ENCODE measurements at regions of chr3 and their contacts with region 1.

Region 1: DNA sequence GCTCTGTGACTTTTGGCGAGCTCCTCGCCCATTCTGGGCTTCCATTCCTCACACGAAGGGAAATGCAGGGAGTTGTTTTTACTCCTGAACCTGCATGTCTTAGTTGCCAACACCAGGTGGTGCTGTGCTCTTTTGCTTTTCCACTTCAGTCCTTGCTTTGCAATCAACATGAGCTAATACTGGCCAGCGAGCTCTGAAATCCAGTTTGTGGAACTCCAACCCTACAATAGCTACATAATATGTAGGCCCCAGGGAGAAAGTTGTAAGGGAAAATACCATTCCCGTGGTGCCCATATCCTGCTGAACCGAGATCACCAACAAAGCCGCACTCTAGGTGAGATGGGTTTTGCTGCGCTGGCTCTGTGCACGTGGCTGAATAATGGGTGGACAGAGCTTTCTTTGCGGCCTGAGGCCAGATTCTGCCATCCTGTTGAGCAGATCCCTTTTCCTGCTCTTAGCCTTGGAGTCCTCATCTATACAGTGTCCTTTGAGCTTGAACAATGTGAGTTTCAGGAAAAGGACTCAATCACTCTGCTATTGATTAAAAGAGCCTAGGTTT is 25.0 kb downstream of the LSM3 start:
- DNase-seq: peak; percentile 77
- H3K4me3 ChIP-seq: no peak overlapping the region
- H3K27ac ChIP-seq: no peak overlapping the region
- H3K27me3 ChIP-seq: no peaks in the 10 kb centered on the region
- CTCF ChIP-seq: peak; percentile 91

Region 2: DNA sequence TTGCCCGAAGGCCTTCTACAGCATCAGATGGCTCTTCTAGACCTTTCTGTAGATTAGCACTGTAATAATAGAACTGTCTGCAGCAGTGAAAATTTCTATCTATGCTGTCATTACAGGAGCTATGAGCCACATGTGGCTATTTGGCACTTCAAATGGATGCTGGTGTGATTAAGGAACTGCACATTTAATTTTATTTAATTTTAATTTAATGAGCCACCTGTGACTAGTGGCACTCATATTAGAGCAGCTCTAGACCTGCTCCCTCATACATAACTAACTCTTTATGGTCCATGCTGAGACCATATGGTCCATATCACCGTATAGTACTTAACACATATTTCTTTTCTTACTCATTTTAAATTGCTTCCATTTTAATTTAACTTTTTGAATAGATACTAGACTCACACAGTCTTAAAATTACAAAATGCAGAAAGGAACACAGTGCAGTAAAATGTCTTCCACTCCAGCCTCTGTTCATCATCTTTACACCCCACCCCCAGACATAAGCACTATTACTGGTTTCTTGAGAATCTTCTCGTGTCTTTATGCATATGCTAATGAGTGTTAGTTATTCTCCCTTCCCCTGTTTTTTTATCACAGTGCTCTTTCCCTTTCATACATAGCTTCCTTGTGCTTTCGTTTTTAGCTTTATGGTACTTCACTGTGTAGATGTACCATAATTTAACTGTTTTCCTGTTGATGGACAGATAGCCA is 15.4 kb before region 1 on chr3:
- CTCF ChIA-PET with region 1: interaction called, 14 read pairs
- POLR2A ChIA-PET with region 1: no interaction called
- DNase-seq: no peak
- H3K4me3 ChIP-seq: no peak overlapping the region
- H3K27ac ChIP-seq: no peak overlapping the region
- H3K27me3 ChIP-seq: no peaks in the 10 kb centered on the region
- CTCF ChIP-seq: no peak

Region 3: DNA sequence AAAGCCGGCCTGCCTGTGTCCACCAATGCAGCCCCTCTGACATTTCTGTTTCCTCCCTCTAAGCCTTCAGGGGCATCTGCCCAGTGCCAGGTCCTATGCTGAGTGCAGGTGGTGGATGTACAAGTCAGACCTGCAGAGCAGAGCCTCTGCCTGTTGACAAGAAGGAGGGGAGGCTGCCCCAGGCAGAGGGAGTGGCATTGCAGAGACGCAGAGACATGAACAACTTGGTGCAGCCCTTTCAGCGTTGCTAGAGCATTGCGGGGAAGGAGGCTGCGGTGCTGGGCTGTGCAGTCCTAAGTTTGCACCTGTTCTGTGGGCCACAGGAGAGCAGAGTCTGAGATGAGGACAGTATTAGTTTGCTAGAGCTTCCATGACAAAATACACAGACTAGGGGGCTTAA is 40.2 kb after region 1 on chr3:
- CTCF ChIA-PET with region 1: interaction called, 14 read pairs
- POLR2A ChIA-PET with region 1: no interaction called
- DNase-seq: no peak
- H3K4me3 ChIP-seq: no peak overlapping the region
- H3K27ac ChIP-seq: no peak overlapping the region
- H3K27me3 ChIP-seq: no peaks in the 10 kb centered on the region
- CTCF ChIP-seq: no peak

Region 4: GRCh38 chr3:14289590-14290461 is 86.2 kb after region 1 on chr3:
- CTCF ChIA-PET with region 1: interaction called, 28 read pairs
- POLR2A ChIA-PET with region 1: no interaction called
- DNase-seq: peak; percentile 91
- H3K4me3 ChIP-seq: no peak overlapping the region
- H3K27ac ChIP-seq: peak overlapping the region; percentile 47
- H3K27me3 ChIP-seq: peaks cover 20% of the 10 kb centered on the region
- CTCF ChIP-seq: no peak

Region 5: DNA sequence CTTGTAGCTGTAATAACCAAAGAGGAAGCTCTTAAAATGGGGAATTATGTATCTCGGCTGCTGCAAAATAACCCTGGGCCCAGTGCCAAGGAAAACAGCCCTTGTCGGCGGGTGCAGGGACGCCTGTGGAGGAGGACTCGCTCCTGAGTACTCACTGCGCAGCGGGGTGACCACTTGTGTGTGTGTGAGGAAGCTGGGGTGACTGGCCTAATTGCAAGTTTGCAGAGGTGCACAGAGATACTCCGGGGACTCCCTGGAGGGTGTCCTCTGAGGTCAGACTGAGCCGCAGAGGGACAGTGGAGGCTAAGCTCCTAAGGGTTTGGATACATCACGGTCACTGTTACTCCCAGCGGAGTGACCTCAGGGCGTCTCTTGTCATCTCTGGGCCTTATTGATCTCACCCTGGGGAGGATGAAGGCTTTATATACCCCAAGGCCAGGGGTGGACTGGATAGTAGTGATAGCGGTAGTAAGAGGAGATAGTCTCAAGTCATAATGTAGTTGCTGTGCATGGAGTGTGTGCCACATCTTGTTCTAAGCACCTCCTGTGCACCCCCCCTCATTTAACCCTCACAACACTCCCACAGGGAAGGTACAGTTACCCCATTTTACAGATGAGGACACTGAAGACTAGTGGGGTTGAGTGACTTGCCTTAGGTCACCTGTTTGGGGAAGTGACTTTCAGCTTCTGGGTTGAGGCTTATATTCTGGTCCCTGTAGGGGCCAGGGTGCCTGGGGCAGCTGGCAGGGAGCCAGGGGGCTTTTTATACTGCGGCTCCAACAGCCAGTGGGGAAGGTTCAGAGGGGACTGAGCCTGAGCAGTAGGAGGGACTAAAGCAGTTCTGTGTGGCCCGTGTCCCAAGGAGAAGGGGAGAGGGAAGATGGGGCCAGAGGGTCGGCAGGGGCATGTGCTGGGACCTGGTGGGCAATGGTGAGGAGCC is 236.2 kb after region 1 on chr3:
- CTCF ChIA-PET with region 1: interaction called, 17 read pairs
- POLR2A ChIA-PET with region 1: no interaction called
- DNase-seq: no peak
- H3K4me3 ChIP-seq: no peak overlapping the region
- H3K27ac ChIP-seq: no peak overlapping the region
- H3K27me3 ChIP-seq: no peaks in the 10 kb centered on the region
- CTCF ChIP-seq: no peak

Region 6: DNA sequence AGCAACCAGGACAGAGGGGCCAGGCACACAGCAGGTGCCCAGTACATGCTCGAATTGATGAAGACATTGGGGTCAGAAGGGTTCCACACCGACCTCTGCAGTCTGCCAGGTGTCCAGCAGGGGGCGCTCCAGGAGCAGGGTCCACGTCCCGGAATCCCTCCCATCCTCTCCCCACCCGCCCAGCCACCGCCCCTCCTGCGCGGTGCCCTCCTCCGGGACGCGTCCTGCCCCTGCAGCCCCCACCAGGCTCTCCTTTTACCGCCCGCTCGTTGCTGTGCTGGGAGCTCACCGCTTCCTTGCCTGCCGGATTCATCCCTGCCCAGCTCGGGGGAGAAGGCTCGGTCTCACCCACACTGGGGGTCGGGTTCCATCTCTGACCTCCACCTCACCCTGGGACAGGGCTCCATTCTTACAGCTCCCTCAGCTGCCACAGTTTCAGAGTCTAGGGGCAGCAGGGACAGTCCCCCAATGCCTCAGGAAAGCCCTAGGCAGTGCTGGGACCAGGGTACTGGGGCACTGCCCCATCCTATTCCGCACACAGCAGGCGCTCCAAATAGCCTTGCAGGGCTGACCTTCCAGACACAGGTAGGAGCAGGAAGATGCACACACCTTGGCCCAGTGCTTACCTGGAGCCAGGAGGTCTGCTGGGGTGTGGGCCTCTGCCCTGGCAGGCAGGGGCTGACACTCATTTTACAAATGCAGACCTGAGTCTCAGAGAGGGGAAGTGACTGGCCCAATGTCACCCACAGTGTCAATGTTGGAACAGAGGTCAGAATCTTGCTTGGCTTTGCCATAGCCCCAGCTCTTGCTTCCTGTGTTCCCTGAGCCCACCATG is 305.6 kb after region 1 on chr3:
- CTCF ChIA-PET with region 1: interaction called, 30 read pairs
- POLR2A ChIA-PET with region 1: no interaction called
- DNase-seq: no peak
- H3K4me3 ChIP-seq: no peak overlapping the region
- H3K27ac ChIP-seq: no peak overlapping the region
- H3K27me3 ChIP-seq: peaks cover 10% of the 10 kb centered on the region
- CTCF ChIP-seq: peak; percentile 84